CD4-positive, alpha-beta T cell (primary cell): ENCODE measurements at regions of chr14 and their contacts with region 1.

Region 1: DNA sequence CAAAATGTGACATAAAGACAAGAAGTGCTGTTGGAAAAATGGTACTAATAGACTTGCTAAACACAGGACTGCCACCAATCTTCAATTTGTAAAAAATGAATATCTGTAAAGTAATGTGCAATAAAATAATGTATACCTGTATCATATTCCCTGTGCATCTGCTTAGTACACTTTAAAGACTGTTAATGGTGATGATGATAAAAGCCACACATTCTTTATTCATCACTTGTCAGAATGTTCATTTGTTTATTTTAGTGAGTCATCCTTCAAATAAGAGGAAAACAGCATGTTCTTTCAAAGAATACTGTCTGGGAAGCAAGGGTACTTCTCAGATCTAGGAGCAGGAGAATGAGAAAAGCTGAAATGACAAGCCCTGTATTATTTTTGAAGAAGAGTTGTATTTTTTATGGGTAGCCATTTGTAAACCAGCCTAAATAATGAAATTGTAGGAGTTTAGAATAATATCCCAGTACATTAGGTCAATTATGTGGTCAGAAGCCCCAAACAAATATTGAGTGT is 78.3 kb upstream of the PSMA6 start:
- DNase-seq: no peak
- ATAC-seq: no peak
- H3K4me3 ChIP-seq: no peak overlapping the region
- H3K4me3 Mint-ChIP-seq: no peak overlapping the region
- H3K27ac ChIP-seq: no peak overlapping the region
- H3K27ac Mint-ChIP-seq: no peak overlapping the region
- H3K4me1 ChIP-seq: no peaks in the 10 kb centered on the region
- H3K4me1 Mint-ChIP-seq: peaks cover 14% of the 10 kb centered on the region
- H3K27me3 ChIP-seq: no peaks in the 10 kb centered on the region
- H3K27me3 Mint-ChIP-seq: no peaks in the 10 kb centered on the region
- CTCF ChIP-seq: no peak

Region 2: DNA sequence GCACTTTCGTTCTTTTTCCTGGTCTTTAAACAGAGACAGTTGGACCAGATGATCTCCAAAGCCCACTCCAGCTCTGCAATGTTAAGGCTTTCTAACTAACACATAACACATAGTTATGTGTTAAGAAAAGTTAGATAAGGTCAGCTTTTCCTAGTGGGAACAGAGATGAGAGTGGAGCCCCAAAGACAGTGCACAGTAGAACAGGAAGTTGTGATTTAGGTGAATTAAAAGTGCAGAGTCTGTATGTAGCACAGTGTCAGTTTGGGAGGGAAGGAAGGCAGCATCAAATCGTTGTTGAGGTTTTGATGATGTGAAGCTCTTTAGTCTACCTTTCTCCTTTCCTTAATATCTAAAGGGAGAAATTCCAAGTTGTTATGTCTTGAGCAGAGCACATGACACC is 59.9 kb before region 1 on chr14:
- CTCF ChIA-PET with region 1: interaction called, 3 read pairs
- POLR2A ChIA-PET with region 1: no interaction called
- intact Hi-C with region 1: loop called in 1 of 2 experiments (anchors 5 kb)
- DNase-seq: no peak
- ATAC-seq: no peak
- H3K4me3 ChIP-seq: no peak overlapping the region
- H3K4me3 Mint-ChIP-seq: no peak overlapping the region
- H3K27ac ChIP-seq: no peak overlapping the region
- H3K27ac Mint-ChIP-seq: no peak overlapping the region
- H3K4me1 ChIP-seq: peaks cover 7% of the 10 kb centered on the region
- H3K4me1 Mint-ChIP-seq: peaks cover 61% of the 10 kb centered on the region
- H3K27me3 ChIP-seq: no peaks in the 10 kb centered on the region
- H3K27me3 Mint-ChIP-seq: no peaks in the 10 kb centered on the region
- CTCF ChIP-seq: no peak